ENCODE measurements at regions of chr21 and their contacts with region 1.

Region 1: DNA sequence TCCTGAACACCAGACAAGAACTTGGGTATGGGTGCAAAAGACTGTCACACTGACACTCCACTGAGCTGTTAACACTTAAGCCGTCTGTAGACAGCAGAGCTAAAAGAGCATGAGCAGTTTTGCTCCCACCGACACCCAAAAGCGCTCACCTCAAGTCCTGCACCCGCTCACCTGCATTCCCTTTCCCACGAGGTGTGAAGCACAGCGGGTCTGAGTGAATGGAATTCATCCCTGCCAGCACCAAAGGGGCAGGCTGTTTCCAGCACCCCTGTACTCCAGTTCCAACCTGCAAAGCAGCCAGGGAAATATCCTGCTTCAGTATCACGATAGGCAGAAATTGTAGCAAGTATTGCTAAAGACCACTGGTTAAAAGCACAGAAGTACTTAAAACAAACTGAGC is 28.8 kb downstream of the KRTAP21-3 start:
- DNase-seq: no peak
- ATAC-seq: no peak
- H3K4me3 ChIP-seq: no peak overlapping the region
- H3K27ac ChIP-seq: no peak overlapping the region
- H3K4me1 ChIP-seq: no peaks in the 10 kb centered on the region
- H3K27me3 ChIP-seq: no peaks in the 10 kb centered on the region
- CTCF ChIP-seq: no peak

Region 2: DNA sequence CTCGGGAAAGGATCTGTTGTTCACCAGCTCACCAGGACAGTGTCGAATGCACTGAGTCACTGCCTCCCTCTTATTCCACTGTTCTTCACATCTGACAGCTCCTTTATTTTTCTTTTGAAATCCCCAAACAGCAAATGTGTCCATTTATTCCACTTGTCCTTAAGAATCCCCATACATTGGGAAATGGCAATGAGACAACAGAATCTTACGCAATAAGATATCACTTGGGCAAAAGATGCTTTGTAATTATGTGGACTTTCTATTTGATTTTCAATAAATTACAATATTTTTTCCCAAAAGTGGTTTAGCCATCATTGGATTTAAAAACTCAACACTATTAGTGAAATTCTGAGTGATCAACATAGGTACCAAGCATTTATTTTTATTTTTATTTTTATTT is 51.1 kb before region 1 on chr21:
- intact Hi-C with region 1: no loop called
- DNase-seq: no peak
- ATAC-seq: no peak
- H3K4me3 ChIP-seq: no peak overlapping the region
- H3K27ac ChIP-seq: no peak overlapping the region
- H3K4me1 ChIP-seq: no peaks in the 10 kb centered on the region
- H3K27me3 ChIP-seq: no peaks in the 10 kb centered on the region
- CTCF ChIP-seq: no peak

Region 3: GRCh38 chr21:30652891-30653290 is 36.9 kb before region 1 on chr21:
- intact Hi-C with region 1: loop called in 1 of 10 experiments (anchors 5 kb)
- DNase-seq: no peak
- ATAC-seq: no peak
- H3K4me3 ChIP-seq: no peak overlapping the region
- H3K27ac ChIP-seq: no peak overlapping the region
- H3K4me1 ChIP-seq: no peaks in the 10 kb centered on the region
- H3K27me3 ChIP-seq: no peaks in the 10 kb centered on the region
- CTCF ChIP-seq: no peak

Region 4: DNA sequence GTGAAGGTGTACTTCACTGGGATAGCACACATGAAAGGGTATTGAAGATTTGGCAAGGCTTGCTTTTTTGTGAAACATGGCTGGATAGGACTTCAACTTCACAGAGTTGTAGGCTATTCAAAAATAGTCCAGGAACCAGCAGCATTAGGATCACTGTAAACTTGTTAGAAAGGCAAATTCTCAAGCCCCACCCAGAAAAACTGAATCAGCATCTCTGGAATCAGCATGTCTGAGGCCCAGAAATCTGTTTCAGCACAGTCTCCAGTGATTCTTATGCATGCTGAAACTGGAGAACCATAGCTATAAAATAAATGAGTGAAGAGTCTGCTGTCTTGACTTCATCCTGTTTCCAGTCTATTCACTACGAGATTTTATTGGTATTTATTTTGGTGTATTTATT is 36.9 kb after region 1 on chr21:
- intact Hi-C with region 1: no loop called
- DNase-seq: no peak
- ATAC-seq: no peak
- H3K4me3 ChIP-seq: no peak overlapping the region
- H3K27ac ChIP-seq: no peak overlapping the region
- H3K4me1 ChIP-seq: no peaks in the 10 kb centered on the region
- H3K27me3 ChIP-seq: no peaks in the 10 kb centered on the region
- CTCF ChIP-seq: no peak

Measured in heart right ventricle (tissue), 16 donors.